Heart left ventricle (tissue), 16 donors: ENCODE measurements at regions of chrX and their contacts with region 1.

Region 1: GRCh38 chrX:74536152-74536831 is 78.1 kb downstream of the RLIM start:
- DNase-seq: peak; percentile 87 to 93 (median 91)
- ATAC-seq: peak; percentile 73 to 93 (median 90)
- H3K4me3 ChIP-seq: peak overlapping the region; percentile 15 to 72 (median 54)
- H3K27ac ChIP-seq: peak overlapping the region; percentile 76 to 96 (median 88)
- H3K4me1 ChIP-seq: peaks cover 0 to 14% (median 1%) of the 10 kb centered on the region in 12 donors
- H3K27me3 ChIP-seq: peaks cover 0 to 9% (median 0%) of the 10 kb centered on the region in 9 donors
- CTCF ChIP-seq: peak; percentile 1 to 53 (median 30)
- POLR2A ChIP-seq: peak in 1 of 2 donors; percentile 41

Region 2: GRCh38 chrX:74291964-74292807 is 244.1 kb before region 1 on chrX:
- intact Hi-C with region 1: loop called in 1 of 10 experiments (anchors 5 kb)
- DNase-seq: peak; percentile 85 to 93 (median 89)
- ATAC-seq: peak; percentile 94 to 96 (median 95)
- H3K4me3 ChIP-seq: peak overlapping the region; percentile 45 to 84 (median 68)
- H3K27ac ChIP-seq: peak overlapping the region; percentile 78 to 94 (median 91)
- H3K4me1 ChIP-seq: peaks cover 0 to 25% (median 10%) of the 10 kb centered on the region in 12 donors
- H3K27me3 ChIP-seq: peaks cover 0 to 5% (median 0%) of the 10 kb centered on the region in 9 donors
- CTCF ChIP-seq: peak in 6 of 12 donors; percentile 13 to 50 (median 22)
- POLR2A ChIP-seq: peak in 1 of 2 donors; percentile 61

Region 3: GRCh38 chrX:74382613-74383012 is 153.7 kb before region 1 on chrX:
- intact Hi-C with region 1: loop called in 4 of 10 experiments (anchors 1 to 5 kb)
- DNase-seq: peak in 4 of 5 donors; percentile 27 to 66 (median 42)
- ATAC-seq: peak; percentile 77 to 90 (median 85)
- H3K4me3 ChIP-seq: no peak overlapping the region
- H3K27ac ChIP-seq: no peak overlapping the region
- H3K4me1 ChIP-seq: no peaks in the 10 kb centered on the region
- H3K27me3 ChIP-seq: peaks cover 0 to 25% (median 0%) of the 10 kb centered on the region in 9 donors
- CTCF ChIP-seq: peak; percentile 49 to 82 (median 65)
- POLR2A ChIP-seq: no peak

Region 4: GRCh38 chrX:74421036-74421739 is 115.1 kb before region 1 on chrX and contains the start of gene SLC16A2:
- intact Hi-C with region 1: loop called in 6 of 10 experiments (anchors 1 to 10 kb)
- DNase-seq: peak; percentile 76 to 85 (median 81)
- ATAC-seq: peak; percentile 74 to 82 (median 78)
- H3K4me3 ChIP-seq: peak within 1 kb of the TSS; percentile 31 to 78 (median 60)
- H3K27ac ChIP-seq: peak within 1 kb of the TSS; percentile 76 to 97 (median 90)
- H3K4me1 ChIP-seq: peaks cover 0 to 8% (median 0%) of the 10 kb centered on the region in 12 donors
- H3K27me3 ChIP-seq: peaks cover 0 to 55% (median 0%) of the 10 kb centered on the region in 9 donors
- CTCF ChIP-seq: no peak
- POLR2A ChIP-seq: peak in 1 of 2 donors; percentile 25
- total RNA-seq, gene SLC16A2: 4.7 to 12.1 (median 7.2) TPM

Region 5: GRCh38 chrX:74458735-74459134 is 77.6 kb before region 1 on chrX:
- intact Hi-C with region 1: no loop called
- DNase-seq: no peak
- ATAC-seq: peak in 1 of 4 donors; percentile 38
- H3K4me3 ChIP-seq: no peak overlapping the region
- H3K27ac ChIP-seq: no peak overlapping the region
- H3K4me1 ChIP-seq: peaks cover 0 to 4% (median 0%) of the 10 kb centered on the region in 12 donors
- H3K27me3 ChIP-seq: peaks cover 0 to 10% (median 0%) of the 10 kb centered on the region in 9 donors
- CTCF ChIP-seq: no peak
- POLR2A ChIP-seq: no peak